Colonic mucosa (tissue), 4 donors: ENCODE measurements at regions of chr16 and their contacts with region 1.

Region 1: GRCh38 chr16:3509470-3509928 is 8.7 kb downstream of the CLUAP1 start:
- DNase-seq: peak; percentile 22
- H3K4me3 ChIP-seq: no peak overlapping the region
- H3K27ac ChIP-seq: no peak overlapping the region
- H3K4me1 ChIP-seq: no peaks in the 10 kb centered on the region
- H3K27me3 ChIP-seq: no peaks in the 10 kb centered on the region
- CTCF ChIP-seq: no peak

Region 2: DNA sequence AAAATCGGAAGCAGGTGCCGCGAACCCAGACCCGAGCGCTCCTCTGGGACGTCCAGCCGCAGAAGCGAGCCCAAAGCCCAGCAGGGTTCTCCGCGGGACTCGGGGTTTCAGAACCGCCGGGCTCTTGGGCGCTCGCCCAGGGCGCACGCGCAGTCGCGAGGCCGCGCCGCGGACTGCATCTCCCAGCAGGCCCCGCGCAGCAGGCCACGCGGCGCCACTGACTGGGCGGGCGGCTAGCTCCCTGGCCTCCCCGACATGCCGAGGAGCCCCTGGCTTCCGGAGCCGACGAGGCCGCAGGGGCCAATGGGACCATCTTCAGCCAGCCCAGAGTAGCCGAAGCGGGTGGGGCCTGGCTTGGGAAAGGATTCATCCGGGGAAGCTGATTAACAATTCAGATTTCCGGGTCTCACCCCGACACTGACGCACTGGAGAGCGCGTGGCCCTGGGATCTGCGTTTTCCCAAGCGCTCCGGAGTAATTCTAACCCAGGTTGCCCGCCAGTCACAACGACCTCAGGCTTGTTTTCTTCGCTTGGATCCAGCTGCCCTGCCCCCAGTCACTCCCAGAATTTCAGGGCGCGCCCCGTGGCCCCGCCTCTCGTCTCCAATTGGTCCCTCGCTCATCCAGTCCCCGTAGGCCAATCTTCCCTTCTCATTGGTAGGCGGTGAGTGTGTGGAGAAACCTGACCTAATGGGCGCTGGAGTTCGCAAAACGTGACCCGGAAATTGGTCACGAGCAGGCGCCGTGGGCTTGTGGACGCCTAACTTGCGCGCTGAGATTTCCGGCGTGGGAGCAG is 226.6 kb before region 1 on chr16 and contains the start of gene ZNF263:
- intact Hi-C with region 1: loop called (anchors 10 kb)
- DNase-seq: peak; percentile 99
- H3K4me3 ChIP-seq: peak within 1 kb of the TSS; percentile 84
- H3K27ac ChIP-seq: peak within 1 kb of the TSS; percentile 96
- H3K4me1 ChIP-seq: peaks cover 15% of the 10 kb centered on the region
- H3K27me3 ChIP-seq: no peaks in the 10 kb centered on the region
- CTCF ChIP-seq: no peak
- total RNA-seq, gene ZNF263: 19.5 to 27.2 TPM